Transverse colon (tissue), 4 donors: ENCODE measurements at regions of chr3 and their contacts with region 1.

Region 1: DNA sequence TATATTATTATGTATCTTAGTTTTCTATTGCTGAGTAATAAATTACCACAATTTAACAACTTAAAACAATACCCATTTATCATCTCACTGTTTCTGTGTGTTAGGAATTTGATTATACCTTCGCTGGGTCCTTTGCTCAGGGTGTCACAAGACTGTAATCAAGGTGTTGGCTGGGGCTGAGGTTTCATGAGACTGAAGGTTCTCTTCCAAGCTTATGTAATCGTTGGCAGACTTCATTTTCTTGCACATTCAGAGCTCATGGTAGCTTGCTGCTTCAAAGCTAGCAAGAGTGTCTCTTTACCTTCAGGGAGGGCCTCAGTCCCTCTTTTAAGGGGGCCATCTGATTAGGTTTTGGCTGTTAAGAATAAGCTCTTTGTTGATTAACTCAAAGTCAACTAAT is 293.1 kb downstream of the POLQ start:
- DNase-seq: no peak
- H3K4me3 ChIP-seq: no peak overlapping the region
- H3K27ac ChIP-seq: no peak overlapping the region
- H3K4me1 ChIP-seq: no peaks in the 10 kb centered on the region
- H3K27me3 ChIP-seq: no peaks in the 10 kb centered on the region
- CTCF ChIP-seq: no peak
- EP300 ChIP-seq: no peak
- POLR2A ChIP-seq: no peak

Region 2: GRCh38 chr3:119937229-119937628 is 1315.4 kb before region 1 on chr3:
- in situ Hi-C with region 1: no loop called
- intact Hi-C with region 1: no loop called
- DNase-seq: no peak
- H3K4me3 ChIP-seq: no peak overlapping the region
- H3K27ac ChIP-seq: no peak overlapping the region
- H3K4me1 ChIP-seq: peaks cover 0 to 6% (median 0%) of the 10 kb centered on the region in 4 donors
- H3K27me3 ChIP-seq: no peaks in the 10 kb centered on the region
- CTCF ChIP-seq: no peak
- EP300 ChIP-seq: no peak
- POLR2A ChIP-seq: no peak

Region 3: GRCh38 chr3:121269389-121269788 is 16.7 kb after region 1 on chr3:
- in situ Hi-C with region 1: no loop called
- intact Hi-C with region 1: no loop called
- DNase-seq: no peak
- H3K4me3 ChIP-seq: no peak overlapping the region
- H3K27ac ChIP-seq: no peak overlapping the region
- H3K4me1 ChIP-seq: no peaks in the 10 kb centered on the region
- H3K27me3 ChIP-seq: no peaks in the 10 kb centered on the region
- CTCF ChIP-seq: no peak
- EP300 ChIP-seq: no peak
- POLR2A ChIP-seq: no peak

Region 4: DNA sequence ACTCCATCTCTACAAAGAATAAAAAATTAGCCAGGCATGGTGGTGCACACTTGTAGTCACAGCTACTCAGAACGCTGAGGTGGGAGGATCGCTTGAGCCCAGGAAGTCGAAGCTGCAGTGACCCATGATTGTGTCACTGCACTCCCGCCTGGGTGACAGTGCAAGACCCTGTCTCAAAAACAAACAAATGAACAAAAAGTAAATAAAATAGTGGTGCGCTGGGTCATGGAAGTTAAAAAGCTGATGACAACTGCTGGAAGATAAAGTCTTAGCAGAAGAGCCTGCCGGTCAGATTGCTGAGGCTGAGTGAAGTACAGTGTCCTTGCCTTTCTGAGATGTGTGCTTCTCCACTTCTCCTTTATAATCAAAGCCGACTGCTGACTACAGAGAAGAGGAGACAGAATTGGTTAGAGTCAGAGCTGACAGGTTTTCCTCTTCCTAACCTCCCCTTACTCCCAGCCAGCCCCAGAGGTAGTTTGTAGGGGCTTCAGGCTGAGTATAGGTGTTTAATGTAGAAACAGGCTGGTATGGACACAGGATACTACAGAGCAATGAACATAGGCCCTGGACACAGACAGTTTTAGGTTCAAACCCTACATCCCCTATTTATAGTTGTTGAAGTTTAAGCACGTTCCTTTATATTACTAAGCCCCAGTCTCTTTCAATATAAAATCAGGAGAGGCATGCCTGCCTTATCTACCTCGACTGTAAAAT is 390.1 kb after region 1 on chr3:
- in situ Hi-C with region 1: no loop called
- intact Hi-C with region 1: loop called (anchors 5 kb)
- DNase-seq: no peak
- H3K4me3 ChIP-seq: no peak overlapping the region
- H3K27ac ChIP-seq: no peak overlapping the region
- H3K4me1 ChIP-seq: no peaks in the 10 kb centered on the region
- H3K27me3 ChIP-seq: no peaks in the 10 kb centered on the region
- CTCF ChIP-seq: no peak
- EP300 ChIP-seq: no peak
- POLR2A ChIP-seq: no peak